ENCODE measurements at regions of chr10 and their contacts with region 1.

Region 1: DNA sequence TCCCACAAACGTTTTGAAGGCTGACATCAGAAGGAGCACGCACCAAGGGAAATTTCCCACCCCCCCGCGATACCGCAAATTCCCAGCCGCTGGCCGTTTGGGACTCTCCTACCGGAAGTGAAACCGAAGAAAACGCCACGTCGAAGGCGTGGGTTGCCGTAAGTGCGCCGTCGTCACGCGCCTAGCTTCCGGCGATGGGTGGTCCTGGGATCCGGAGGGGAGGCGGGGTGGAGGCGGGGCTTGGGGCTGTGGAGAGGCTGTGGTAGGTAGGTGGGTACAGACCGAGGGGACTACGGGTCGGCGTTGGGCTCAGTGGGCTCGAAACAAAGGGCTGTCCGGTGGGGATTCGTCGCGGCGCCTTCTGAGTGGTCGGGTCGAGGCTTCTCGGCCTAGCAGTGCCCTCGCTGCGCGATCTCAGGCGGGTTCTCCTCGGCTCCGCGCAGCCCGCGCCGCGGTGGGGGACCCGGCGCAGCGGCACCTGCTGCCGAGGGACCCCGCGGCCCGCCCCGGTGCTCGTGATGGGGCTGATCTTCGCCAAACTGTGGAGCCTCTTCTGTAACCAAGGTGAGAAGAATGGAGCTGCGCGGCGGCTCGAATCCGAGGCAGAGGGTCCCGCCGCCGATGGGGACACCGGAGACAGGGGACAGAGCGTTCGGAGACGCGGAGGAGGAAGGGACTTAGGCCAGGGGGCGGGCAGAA is at the start of gene ARL5B:
- DNase-seq: peak; percentile 98
- H3K4me3 ChIP-seq: peak within 1 kb of the TSS; percentile 98
- H3K27ac ChIP-seq: peak within 1 kb of the TSS; percentile 97
- H3K4me1 ChIP-seq: peaks cover 20% of the 10 kb centered on the region
- H3K27me3 ChIP-seq: no peaks in the 10 kb centered on the region
- CTCF ChIP-seq: no peak
- total RNA-seq, gene ARL5B: 30.0 and 30.2 TPM in 2 replicates

Region 2: GRCh38 chr10:18204039-18204835 is 455.0 kb before region 1 on chr10:
- CTCF ChIA-PET with region 1: no interaction called
- POLR2A ChIA-PET with region 1: interaction called, 19 read pairs
- intact Hi-C with region 1: no loop called
- DNase-seq: no peak
- H3K4me3 ChIP-seq: no peak overlapping the region
- H3K27ac ChIP-seq: no peak overlapping the region
- H3K4me1 ChIP-seq: peaks cover 37% of the 10 kb centered on the region
- H3K27me3 ChIP-seq: no peaks in the 10 kb centered on the region
- CTCF ChIP-seq: no peak

Region 3: GRCh38 chr10:18699849-18700840 is 40.9 kb after region 1 on chr10:
- CTCF ChIA-PET with region 1: no interaction called
- POLR2A ChIA-PET with region 1: interaction called, 10 read pairs
- intact Hi-C with region 1: no loop called
- DNase-seq: no peak
- H3K4me3 ChIP-seq: no peak overlapping the region
- H3K27ac ChIP-seq: no peak overlapping the region
- H3K4me1 ChIP-seq: no peaks in the 10 kb centered on the region
- H3K27me3 ChIP-seq: no peaks in the 10 kb centered on the region
- CTCF ChIP-seq: no peak

Region 4: GRCh38 chr10:18753496-18753895 is 94.2 kb after region 1 on chr10:
- CTCF ChIA-PET with region 1: no interaction called
- POLR2A ChIA-PET with region 1: no interaction called
- intact Hi-C with region 1: no loop called
- DNase-seq: no peak
- H3K4me3 ChIP-seq: no peak overlapping the region
- H3K27ac ChIP-seq: no peak overlapping the region
- H3K4me1 ChIP-seq: no peaks in the 10 kb centered on the region
- H3K27me3 ChIP-seq: no peaks in the 10 kb centered on the region
- CTCF ChIP-seq: no peak

Region 5: GRCh38 chr10:20240643-20241042 is 1581.4 kb after region 1 on chr10:
- CTCF ChIA-PET with region 1: no interaction called
- POLR2A ChIA-PET with region 1: interaction called, 13 read pairs
- intact Hi-C with region 1: no loop called
- DNase-seq: no peak
- H3K4me3 ChIP-seq: no peak overlapping the region
- H3K27ac ChIP-seq: no peak overlapping the region
- H3K4me1 ChIP-seq: peaks cover 13% of the 10 kb centered on the region
- H3K27me3 ChIP-seq: no peaks in the 10 kb centered on the region
- CTCF ChIP-seq: no peak

Measured in A673 (cell line).